GM10248 (cell line): ENCODE measurements at regions of chr1 and their contacts with region 1.

Region 1: GRCh38 chr1:20574686-20575540 is 14.0 kb upstream of the CDA start:
- DNase-seq: peak; percentile 82
- CTCF ChIP-seq: peak; percentile 59

Region 2: DNA sequence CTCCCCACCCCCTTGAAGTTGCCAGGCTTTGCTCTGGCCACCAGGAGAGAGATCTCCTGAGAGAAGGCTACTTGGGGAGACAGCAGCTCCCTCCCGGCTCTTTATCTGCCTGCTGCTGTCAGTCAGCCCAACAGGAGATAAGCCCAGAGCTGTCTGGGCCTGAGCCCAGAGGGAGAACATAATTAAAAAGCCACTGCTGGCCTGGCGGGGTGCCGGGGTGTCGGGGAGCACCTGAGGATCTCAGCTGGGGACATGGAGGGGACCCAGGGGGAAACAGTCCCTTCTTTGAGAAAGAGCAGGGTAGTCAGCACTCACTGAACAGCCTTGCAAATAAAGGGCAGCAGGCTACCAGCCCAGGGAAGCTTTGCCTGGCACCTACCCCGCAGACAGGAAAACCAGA is 266.3 kb before region 1 on chr1:
- CTCF ChIA-PET with region 1: no interaction called
- POLR2A ChIA-PET with region 1: no interaction called
- DNase-seq: no peak
- CTCF ChIP-seq: no peak

Region 3: GRCh38 chr1:20588634-20589225 is 13.8 kb after region 1 on chr1 and contains the start of gene CDA:
- CTCF ChIA-PET with region 1: interaction called, 24 read pairs
- POLR2A ChIA-PET with region 1: no interaction called
- DNase-seq: no peak
- CTCF ChIP-seq: no peak

Region 4: GRCh38 chr1:20641975-20642374 is 67.1 kb after region 1 on chr1:
- CTCF ChIA-PET with region 1: interaction called, 10 read pairs
- POLR2A ChIA-PET with region 1: no interaction called
- DNase-seq: no peak
- CTCF ChIP-seq: no peak